Ovary (tissue), 10 donors: ENCODE measurements at regions of chr6 and their contacts with region 1.

Region 1: GRCh38 chr6:120116343-120116742 is 766.8 kb upstream of the MAN1A1 start:
- DNase-seq: no peak
- H3K4me3 ChIP-seq: no peak overlapping the region
- H3K27ac ChIP-seq: no peak overlapping the region
- H3K4me1 ChIP-seq: no peaks in the 10 kb centered on the region
- H3K27me3 ChIP-seq: no peaks in the 10 kb centered on the region
- CTCF ChIP-seq: no peak
- EP300 ChIP-seq: no peak
- POLR2A ChIP-seq: no peak

Region 2: DNA sequence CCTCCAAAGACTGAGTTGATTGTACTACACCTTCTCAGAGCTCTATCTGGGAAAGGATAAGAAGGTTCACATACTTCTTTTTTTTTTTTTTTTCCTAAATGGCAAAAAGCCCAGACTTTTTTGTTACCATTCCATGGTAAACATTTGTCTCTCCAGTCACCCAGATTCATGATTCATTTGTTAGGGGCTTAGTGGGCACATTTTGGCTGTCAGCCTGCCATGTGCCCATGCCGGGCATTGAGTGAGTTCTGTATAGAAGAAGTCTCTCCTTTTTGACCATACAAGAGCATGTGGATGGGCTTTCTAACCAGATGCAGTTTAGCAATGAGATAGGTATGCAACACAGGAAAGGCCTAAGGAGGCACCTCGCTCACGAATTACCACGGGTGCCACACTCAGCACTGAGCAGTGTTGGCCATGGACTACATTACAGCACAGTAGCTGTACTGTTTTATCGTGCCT is 1835.6 kb after region 1 on chr6:
- intact Hi-C with region 1: loop called in 1 of 4 experiments (anchors 10 kb)
- DNase-seq: no peak
- H3K4me3 ChIP-seq: no peak overlapping the region
- H3K27ac ChIP-seq: no peak overlapping the region
- H3K4me1 ChIP-seq: no peaks in the 10 kb centered on the region
- H3K27me3 ChIP-seq: no peaks in the 10 kb centered on the region
- CTCF ChIP-seq: no peak
- EP300 ChIP-seq: no peak
- POLR2A ChIP-seq: no peak